Endothelial cell of umbilical vein (primary cell): ENCODE measurements at regions of chrX and their contacts with region 1.

Region 1: DNA sequence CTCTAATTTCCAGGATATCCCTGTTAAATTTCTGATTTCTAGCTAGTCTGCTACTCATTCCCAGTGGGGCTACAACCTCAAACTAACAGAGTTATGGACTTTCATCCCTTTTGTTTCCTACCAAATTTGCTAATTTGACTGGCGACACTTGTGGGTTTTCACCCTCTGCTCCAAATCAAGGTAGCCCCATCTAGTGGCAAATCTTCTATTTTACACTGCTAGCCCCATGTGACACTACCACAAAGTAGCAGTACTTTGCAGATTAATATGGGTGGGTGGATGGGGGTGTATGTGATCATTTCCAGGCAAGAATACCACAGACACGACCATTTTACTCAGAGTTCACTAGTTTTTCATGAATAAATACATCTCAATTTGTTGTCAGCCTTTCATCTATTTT is 150.3 kb downstream of the MSL3 start:
- DNase-seq: peak; percentile 32
- H3K4me3 ChIP-seq: no peak overlapping the region
- H3K27ac ChIP-seq: no peak overlapping the region
- H3K4me1 ChIP-seq: no peaks in the 10 kb centered on the region
- H3K27me3 ChIP-seq: no peaks in the 10 kb centered on the region
- CTCF ChIP-seq: peak; percentile 18 to 30
- POLR2A ChIP-seq: no peak

Region 2: DNA sequence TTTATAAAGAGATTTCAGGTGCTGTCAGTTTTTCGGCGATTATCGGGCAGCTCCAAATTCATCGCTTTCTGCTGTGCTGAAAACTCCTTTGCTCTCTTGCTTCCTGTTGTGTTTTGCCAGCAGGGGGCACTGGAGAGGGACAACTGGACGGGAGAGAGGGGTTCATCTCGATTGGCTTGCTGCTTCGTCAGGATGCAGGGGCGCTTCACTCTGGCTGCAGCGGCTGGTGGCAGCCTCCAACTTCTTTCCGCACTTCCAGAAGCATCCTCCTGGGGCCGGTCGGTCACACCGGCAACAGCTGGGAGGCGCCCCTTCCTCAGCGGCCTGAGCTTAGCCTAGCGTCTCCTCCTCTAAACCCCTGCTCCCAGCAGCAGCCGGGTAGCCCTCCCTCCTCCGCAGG is 120.8 kb before region 1 on chrX:
- CTCF ChIA-PET with region 1: interaction called, 23 read pairs
- POLR2A ChIA-PET with region 1: no interaction called
- dilution Hi-C with region 1: no loop called
- intact Hi-C with region 1: loop called (anchors 1 kb)
- DNase-seq: peak; percentile 49
- H3K4me3 ChIP-seq: no peak overlapping the region
- H3K27ac ChIP-seq: no peak overlapping the region
- H3K4me1 ChIP-seq: no peaks in the 10 kb centered on the region
- H3K27me3 ChIP-seq: no peaks in the 10 kb centered on the region
- CTCF ChIP-seq: peak; percentile 56 to 62
- POLR2A ChIP-seq: no peak

Region 3: DNA sequence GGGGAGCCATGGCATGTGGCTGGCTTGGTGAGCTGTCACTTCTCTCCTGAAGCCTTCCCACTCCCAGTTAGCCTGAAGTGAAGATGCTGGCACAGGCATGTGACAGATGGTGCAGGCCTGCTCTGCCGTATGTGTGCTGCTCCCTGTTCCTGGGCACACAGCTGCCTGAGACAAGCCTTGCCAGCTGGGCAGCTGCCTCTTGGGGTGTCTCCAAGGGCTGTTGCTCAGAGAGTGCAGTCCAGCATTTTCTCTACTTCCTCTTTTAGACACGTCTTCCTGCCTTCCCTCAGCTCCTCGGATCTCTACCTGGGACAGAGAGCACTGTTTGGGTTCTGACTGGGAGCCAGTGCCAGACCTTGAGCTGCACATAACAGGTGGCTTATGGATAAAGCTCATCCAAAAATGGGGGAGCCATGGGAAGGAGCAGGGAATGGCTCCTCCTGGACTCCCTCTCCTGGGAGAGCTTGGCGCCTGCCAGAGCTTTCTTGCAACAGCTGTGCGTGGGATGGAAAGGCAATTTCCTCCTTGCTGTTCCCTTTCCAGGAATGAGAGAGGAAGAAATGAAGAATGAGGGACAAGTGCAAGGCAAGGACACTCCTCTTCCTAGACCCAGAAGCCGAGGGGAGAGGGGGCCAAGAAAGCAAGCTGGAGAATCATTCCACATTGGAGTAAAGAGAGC is 17.4 kb before region 1 on chrX:
- CTCF ChIA-PET with region 1: no interaction called
- POLR2A ChIA-PET with region 1: no interaction called
- dilution Hi-C with region 1: no loop called
- intact Hi-C with region 1: no loop called
- DNase-seq: no peak
- H3K4me3 ChIP-seq: no peak overlapping the region
- H3K27ac ChIP-seq: no peak overlapping the region
- H3K4me1 ChIP-seq: peaks cover 10% of the 10 kb centered on the region
- H3K27me3 ChIP-seq: no peaks in the 10 kb centered on the region
- CTCF ChIP-seq: no peak
- POLR2A ChIP-seq: no peak

Region 4: DNA sequence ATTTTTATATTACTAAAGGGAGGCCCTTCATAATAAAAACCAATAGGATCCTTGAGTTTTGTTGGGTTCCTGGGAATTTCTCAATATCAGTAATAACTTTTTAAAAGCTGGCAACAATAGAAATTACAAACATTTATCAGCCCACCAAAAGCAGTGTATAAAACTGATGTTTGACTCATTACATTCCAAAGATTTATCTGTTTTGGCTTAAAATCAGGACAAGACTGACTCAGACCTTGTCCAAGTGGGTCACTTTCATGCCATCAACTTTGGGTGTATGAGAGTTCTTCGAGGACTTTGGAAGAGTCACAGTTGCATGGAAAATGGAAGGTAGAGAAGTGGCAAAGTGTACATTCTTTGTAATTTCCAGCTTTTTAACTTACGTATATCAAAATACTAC is 332.7 kb after region 1 on chrX:
- CTCF ChIA-PET with region 1: no interaction called
- POLR2A ChIA-PET with region 1: no interaction called
- dilution Hi-C with region 1: no loop called
- intact Hi-C with region 1: no loop called
- DNase-seq: no peak
- H3K4me3 ChIP-seq: no peak overlapping the region
- H3K27ac ChIP-seq: no peak overlapping the region
- H3K4me1 ChIP-seq: no peaks in the 10 kb centered on the region
- H3K27me3 ChIP-seq: no peaks in the 10 kb centered on the region
- CTCF ChIP-seq: no peak
- POLR2A ChIP-seq: no peak